GM13976 (cell line): ENCODE measurements at regions of chr5 and their contacts with region 1.

Region 1: GRCh38 chr5:31825518-31826068 is 186.7 kb downstream of the PDZD2 start:
- DNase-seq: peak; percentile 45
- CTCF ChIP-seq: peak; percentile 42

Region 2: DNA sequence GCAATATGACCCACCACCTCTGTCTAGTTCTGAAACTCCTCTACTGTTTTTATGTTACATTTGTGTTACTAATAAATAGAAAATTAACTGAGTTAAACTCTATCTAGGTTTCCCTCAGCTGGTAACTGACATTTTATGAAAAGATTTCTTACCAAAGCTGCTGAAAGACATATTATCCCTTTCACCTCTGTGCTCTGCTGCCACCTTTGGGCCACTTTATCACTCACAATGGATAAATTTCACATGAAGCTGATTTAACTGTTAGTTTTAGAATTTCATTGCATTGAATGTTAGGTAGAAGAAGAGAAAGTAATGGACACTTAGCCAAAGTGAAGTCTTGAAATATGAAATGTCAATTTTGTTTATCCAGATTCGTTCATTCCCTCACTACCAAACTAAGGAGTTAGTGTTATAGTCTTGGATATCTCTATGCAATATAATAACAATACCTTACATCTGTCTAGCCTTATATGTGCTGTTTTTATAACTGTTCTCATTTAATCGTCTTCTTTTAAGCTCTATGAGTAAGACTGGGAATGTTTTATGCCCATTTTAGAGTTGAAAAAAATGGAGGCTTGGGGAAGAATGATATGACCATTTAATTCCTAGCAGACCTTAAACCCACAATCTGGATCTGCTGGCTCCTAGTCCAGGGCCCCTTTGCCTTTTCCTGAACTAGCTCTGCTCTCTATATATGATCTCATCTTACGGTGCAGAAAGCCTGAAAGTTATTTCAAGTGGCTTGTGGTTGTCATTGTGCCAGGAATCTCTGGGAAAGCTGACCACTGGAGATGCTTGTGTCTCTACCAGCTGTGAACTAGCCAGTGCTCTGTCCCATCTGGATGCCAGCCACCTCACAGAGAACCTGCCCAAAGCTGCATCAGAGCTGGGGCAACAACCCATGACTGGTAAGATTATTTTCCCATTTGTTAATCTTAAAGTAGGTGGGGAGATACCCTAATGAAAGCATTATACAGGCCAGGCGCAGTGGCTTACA is 251.4 kb after region 1 on chr5:
- in situ Hi-C with region 1: loop called (anchors 10 kb)
- DNase-seq: peak; percentile 55
- CTCF ChIP-seq: peak; percentile 53

Region 3: GRCh38 chr5:32842813-32843530 is 1017.4 kb after region 1 on chr5:
- in situ Hi-C with region 1: no loop called
- DNase-seq: no peak
- CTCF ChIP-seq: no peak